ENCODE measurements at regions of chr21 and their contacts with region 1.

Region 1: GRCh38 chr21:42009831-42010523 is at the start of gene ZBTB21:
- DNase-seq: peak; percentile 98
- H3K4me3 Mint-ChIP-seq: peak within 1 kb of the TSS; percentile 90
- H3K27ac Mint-ChIP-seq: peak within 1 kb of the TSS; percentile 99
- H3K4me1 Mint-ChIP-seq: peaks cover 33% of the 10 kb centered on the region
- H3K27me3 Mint-ChIP-seq: peaks cover 23% of the 10 kb centered on the region
- total RNA-seq, gene ZBTB21: 31.8 and 33.8 TPM in 2 replicates

Region 2: DNA sequence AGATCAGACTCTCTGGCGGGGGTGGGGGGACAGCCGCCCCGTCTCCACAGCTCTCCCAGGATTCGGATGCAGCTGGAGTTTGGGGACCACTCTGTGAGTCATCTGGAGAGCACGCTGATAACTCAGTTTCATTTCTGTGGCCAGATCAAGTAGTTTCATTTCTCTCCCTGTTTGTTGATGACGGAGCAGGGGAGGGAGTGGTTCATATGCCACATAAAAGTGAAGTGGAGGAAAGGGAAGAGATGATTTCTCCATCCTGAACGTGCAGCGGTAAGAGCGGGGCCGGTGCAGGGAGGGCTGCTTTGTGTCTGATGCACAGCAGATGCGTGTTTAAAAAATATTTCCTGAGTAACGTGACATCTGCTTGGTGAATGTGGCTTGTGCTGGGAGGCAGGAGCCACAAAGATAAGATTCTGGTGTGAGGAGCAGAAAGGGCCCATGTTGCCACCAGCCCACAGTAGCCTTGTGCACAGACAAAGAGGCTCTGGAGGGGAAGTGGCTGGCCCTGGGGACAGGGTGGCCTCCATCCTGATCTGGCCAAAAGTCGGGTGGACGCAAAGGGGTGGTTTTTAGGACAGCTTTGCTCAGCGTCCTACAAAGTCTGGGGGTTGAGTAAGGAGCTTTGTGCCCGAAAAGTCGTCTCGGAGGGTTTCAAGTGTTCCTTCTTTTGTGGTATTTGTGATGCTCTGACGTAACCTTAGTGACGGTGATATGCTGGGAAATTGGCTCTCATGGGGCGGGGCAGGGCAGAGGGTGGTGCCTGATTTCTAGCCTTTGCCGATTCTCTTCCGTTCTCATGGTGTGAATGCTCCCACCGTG is 648.0 kb before region 1 on chr21 and contains the start of gene MX2:
- intact Hi-C with region 1: loop called (anchors 10 kb)
- DNase-seq: peak; percentile 79
- H3K4me3 Mint-ChIP-seq: peak within 1 kb of the TSS; percentile 89
- H3K27ac Mint-ChIP-seq: peak within 1 kb of the TSS; percentile 98
- H3K4me1 Mint-ChIP-seq: peaks cover 56% of the 10 kb centered on the region
- H3K27me3 Mint-ChIP-seq: no peaks in the 10 kb centered on the region
- total RNA-seq, gene MX2: 8.2 and 9.4 TPM in 2 replicates

Region 3: GRCh38 chr21:41879190-41879998 is 130.6 kb before region 1 on chr21 and contains the start of gene PRDM15:
- intact Hi-C with region 1: loop called (anchors 1 kb)
- DNase-seq: peak; percentile 79
- H3K4me3 Mint-ChIP-seq: peak within 1 kb of the TSS; percentile 91
- H3K27ac Mint-ChIP-seq: peak within 1 kb of the TSS; percentile 99
- H3K4me1 Mint-ChIP-seq: peaks cover 26% of the 10 kb centered on the region
- H3K27me3 Mint-ChIP-seq: no peaks in the 10 kb centered on the region
- total RNA-seq, gene PRDM15: 18.1 and 18.4 TPM in 2 replicates

Region 4: GRCh38 chr21:41926117-41926806 is 83.7 kb before region 1 on chr21:
- intact Hi-C with region 1: no loop called
- DNase-seq: peak; percentile 35
- H3K4me3 Mint-ChIP-seq: peak overlapping the region; percentile 84
- H3K27ac Mint-ChIP-seq: peak overlapping the region; percentile 92
- H3K4me1 Mint-ChIP-seq: peaks cover 69% of the 10 kb centered on the region
- H3K27me3 Mint-ChIP-seq: peaks cover 6% of the 10 kb centered on the region

Region 5: GRCh38 chr21:41953831-41954653 is 55.9 kb before region 1 on chr21 and contains the start of gene C2CD2:
- intact Hi-C with region 1: loop called (anchors 1 kb)
- DNase-seq: no peak
- H3K4me3 Mint-ChIP-seq: peak within 1 kb of the TSS; percentile 60
- H3K27ac Mint-ChIP-seq: peak within 1 kb of the TSS; percentile 38
- H3K4me1 Mint-ChIP-seq: peaks cover 6% of the 10 kb centered on the region
- H3K27me3 Mint-ChIP-seq: peaks cover 19% of the 10 kb centered on the region
- total RNA-seq, gene C2CD2: 9.5 and 10.2 TPM in 2 replicates

Region 6: GRCh38 chr21:42107881-42108553 is 98.0 kb after region 1 on chr21:
- intact Hi-C with region 1: loop called (anchors 5 kb)
- DNase-seq: peak; percentile 50
- H3K4me3 Mint-ChIP-seq: no peak overlapping the region
- H3K27ac Mint-ChIP-seq: no peak overlapping the region
- H3K4me1 Mint-ChIP-seq: peaks cover 7% of the 10 kb centered on the region
- H3K27me3 Mint-ChIP-seq: peaks cover 14% of the 10 kb centered on the region

Measured in activated T-helper 1 cell treated with anti-CD3 and anti-CD28 coated beads, Interleukin-12 subunit alpha, Interleukin-12 subunit beta, Interleukin-2, Interleukin-4 antibody, amounts not matched to agents 30 ng/mL and 10 ng/mL and 1 ng/mL, durations not matched to agents 14 hours and 24 hours and 36 hours (primary cell).